Activated CD8-positive, alpha-beta T cell treated with anti-CD3 and anti-CD28 coated beads, Interleukin-2, amount 10 ng/mL, durations not matched to agents 7 days and 5 days (primary cell): ENCODE measurements at regions of chr5 and their contacts with region 1.

Region 1: GRCh38 chr5:141664732-141665461 is 13.7 kb upstream of the FCHSD1 start:
- DNase-seq: peak; percentile 84
- ATAC-seq: peak; percentile 93
- H3K4me3 Mint-ChIP-seq: no peak overlapping the region
- H3K27ac Mint-ChIP-seq: peak overlapping the region; percentile 0
- H3K4me1 Mint-ChIP-seq: peaks cover 8% of the 10 kb centered on the region
- H3K27me3 Mint-ChIP-seq: no peaks in the 10 kb centered on the region

Region 2: DNA sequence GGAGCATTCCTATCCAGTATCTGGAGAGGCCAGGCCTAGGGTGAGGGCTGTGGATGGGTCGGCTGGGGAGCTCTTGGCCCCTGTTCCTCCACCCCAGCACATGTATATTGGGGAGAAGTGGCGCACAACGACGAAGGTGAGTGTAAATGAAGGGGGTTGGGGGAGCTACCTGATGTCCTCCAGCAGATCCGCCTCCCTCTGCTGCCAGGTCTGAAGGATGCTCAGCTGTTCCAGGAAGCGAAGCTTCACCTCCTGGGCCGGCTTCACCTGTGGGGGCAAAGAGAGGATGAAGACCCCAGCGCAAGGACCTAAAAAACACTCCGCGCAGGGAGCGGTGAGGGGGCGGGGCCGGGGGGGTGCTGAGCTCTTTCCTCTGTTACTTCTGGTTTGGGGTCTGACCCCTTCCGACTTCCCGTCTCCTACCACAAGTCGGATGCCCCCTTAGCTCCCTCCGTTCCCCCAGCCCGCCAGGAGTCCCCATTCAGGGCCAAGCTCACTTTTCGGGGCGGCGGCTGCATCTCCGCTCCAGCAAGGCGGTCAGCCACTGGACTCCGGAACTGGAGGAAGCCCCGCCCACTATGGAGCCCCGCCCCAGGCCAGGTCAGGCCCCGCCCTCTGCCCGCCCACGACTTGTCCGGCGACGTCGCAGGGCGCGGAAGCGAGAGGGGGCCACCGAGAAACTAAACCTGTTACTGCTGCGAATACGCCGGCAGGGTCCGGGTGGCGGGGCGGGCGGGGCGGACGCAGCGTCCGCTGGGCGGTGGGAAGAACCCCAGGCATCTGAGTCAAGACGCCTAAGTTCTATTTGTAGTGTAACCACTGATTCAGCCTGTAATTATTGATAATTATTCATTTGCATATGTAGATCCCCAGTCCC is 13.8 kb before region 1 on chr5 and contains the start of gene FCHSD1:
- CTCF ChIA-PET with region 1: interaction called, 10 read pairs
- POLR2A ChIA-PET with region 1: interaction called, 3 read pairs
- DNase-seq: peak; percentile 91
- ATAC-seq: peak; percentile 95
- H3K4me3 Mint-ChIP-seq: peak within 1 kb of the TSS; percentile 95
- H3K27ac Mint-ChIP-seq: peak within 1 kb of the TSS; percentile 95
- H3K4me1 Mint-ChIP-seq: peaks cover 45% of the 10 kb centered on the region
- H3K27me3 Mint-ChIP-seq: no peaks in the 10 kb centered on the region
- total RNA-seq, gene FCHSD1: 46.9 to 47.8 TPM

Region 3: DNA sequence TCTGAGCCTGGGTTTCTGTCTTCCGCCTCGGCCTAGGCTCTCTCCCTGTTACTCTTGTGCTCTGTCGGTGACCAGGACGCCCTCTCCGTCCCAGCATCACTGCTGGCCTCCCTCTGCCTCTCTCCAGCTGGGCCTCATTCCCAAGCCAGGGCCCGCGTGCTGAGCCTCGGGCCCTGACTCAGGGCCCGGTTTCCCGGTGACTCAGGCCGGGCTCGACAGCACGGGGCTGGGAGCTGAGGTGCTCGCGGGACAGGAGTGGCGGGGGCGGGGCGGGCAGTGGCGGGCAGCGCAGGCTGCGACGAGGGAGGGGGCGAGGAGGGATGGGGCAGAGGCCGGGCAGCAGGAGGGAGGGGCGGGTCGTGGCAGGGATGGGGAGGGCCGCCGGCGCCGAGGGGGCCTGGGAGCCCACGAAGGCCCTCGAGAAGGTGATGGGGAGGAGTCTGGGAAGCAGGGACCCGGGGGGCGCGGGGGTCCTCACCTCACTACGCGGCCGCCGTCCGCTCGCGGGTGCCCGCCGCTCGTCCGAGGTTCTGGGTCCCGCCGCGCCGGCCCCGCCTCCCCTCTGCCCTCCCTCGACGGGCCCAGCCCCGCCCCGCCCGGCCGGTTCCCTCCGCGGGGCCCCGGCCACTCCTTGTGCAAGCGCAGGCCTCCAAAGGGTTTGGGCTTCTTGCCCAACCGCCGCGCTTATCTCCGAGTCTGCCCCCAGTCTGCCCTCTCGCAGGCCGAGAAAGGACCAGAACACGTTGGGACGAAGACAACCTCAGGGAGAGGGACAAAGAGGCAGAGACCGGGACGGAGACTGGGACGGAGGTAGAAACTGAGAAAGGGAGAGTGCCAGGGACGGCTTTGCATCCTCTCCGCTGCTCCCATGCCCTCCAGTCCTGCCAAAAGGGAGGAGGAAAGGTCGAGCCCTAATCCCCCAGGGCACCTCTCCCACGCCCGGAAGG is 17.1 kb after region 1 on chr5 and contains the start of gene ARAP3:
- CTCF ChIA-PET with region 1: interaction called, 11 read pairs
- POLR2A ChIA-PET with region 1: no interaction called
- DNase-seq: peak; percentile 54
- ATAC-seq: peak; percentile 86
- H3K4me3 Mint-ChIP-seq: peak within 1 kb of the TSS; percentile 79
- H3K27ac Mint-ChIP-seq: peak within 1 kb of the TSS; percentile 82
- H3K4me1 Mint-ChIP-seq: peaks cover 38% of the 10 kb centered on the region
- H3K27me3 Mint-ChIP-seq: peaks cover 3% of the 10 kb centered on the region
- total RNA-seq, gene ARAP3: 8.5 to 8.8 TPM